ENCODE measurements at regions of chr16 and their contacts with region 1.

Region 1: DNA sequence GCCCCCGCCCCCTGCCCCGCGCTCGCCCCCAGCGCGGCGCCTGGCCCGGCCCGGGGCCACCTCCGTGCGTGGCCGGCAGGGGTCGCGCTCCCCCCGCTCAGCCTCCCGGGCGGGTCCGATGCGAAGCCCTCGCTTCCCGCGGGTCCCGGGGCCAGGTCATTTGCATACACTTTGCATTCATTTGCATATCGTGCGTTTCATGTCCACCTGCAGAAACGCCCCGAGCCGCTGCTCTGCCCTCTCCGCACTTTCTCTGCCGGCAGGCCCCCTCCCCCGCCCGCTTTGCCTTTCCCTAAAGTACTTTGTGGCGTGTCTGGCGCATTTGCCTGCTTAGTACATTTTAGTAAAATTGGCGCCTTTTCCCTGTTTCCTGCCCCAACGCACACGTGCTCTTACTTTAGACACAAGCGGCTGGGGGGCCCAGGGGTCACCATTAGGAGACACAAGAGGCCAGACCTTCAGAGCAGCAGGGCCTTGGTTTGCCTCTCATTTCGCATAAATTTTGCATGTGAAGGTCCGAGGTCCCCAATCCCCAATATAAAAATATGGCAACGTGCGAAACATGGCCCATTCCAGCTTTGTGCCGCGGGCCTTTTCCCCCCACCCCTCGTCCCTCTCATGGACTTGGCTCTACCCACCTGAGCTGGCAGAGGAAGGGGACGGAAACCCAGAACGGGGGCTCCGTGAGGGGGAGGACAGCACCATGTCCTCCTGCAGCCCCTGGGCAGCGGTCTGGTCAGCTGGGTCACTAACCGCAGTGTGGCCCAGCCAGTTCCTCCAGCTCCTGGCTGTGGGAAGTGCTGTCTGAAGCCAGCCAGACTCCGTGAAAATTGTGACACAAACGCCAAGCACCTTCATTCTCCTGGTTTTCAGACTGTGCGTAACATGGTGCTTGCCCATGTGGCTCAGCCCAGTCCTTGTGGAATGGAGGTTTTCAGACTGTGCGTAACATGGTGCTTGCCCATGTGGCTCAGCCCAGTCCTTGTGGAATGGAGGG is 34.8 kb downstream of the CBFA2T3 start:
- DNase-seq: no peak
- H3K4me3 ChIP-seq: peak overlapping the region in 3 of 4 donors; percentile 47 to 56 (median 54)
- H3K27ac ChIP-seq: no peak overlapping the region
- H3K4me1 ChIP-seq: peaks cover 0 to 35% (median 26%) of the 10 kb centered on the region in 4 donors
- H3K27me3 ChIP-seq: peaks cover 24 to 88% (median 52%) of the 10 kb centered on the region in 3 donors
- CTCF ChIP-seq: peak in 3 of 4 experiments; percentile 28 to 76 (median 31)
- EP300 ChIP-seq: no peak
- POLR2A ChIP-seq: no peak

Region 2: GRCh38 chr16:88811769-88812512 is 130.3 kb before region 1 on chr16 and contains the start of gene APRT:
- intact Hi-C with region 1: loop called (anchors 5 kb)
- DNase-seq: peak; percentile 97
- H3K4me3 ChIP-seq: peak within 1 kb of the TSS; percentile 63 to 88 (median 76)
- H3K27ac ChIP-seq: peak within 1 kb of the TSS; percentile 91 to 96 (median 96)
- H3K4me1 ChIP-seq: peaks cover 0 to 36% (median 28%) of the 10 kb centered on the region in 4 donors
- H3K27me3 ChIP-seq: no peaks in the 10 kb centered on the region
- CTCF ChIP-seq: peak in 2 of 4 experiments; percentile 9 to 24
- EP300 ChIP-seq: peak in 1 of 4 donors; percentile 46
- POLR2A ChIP-seq: no peak
- total RNA-seq, gene APRT: 56.6 to 78.3 (median 62.5) TPM

Region 3: DNA sequence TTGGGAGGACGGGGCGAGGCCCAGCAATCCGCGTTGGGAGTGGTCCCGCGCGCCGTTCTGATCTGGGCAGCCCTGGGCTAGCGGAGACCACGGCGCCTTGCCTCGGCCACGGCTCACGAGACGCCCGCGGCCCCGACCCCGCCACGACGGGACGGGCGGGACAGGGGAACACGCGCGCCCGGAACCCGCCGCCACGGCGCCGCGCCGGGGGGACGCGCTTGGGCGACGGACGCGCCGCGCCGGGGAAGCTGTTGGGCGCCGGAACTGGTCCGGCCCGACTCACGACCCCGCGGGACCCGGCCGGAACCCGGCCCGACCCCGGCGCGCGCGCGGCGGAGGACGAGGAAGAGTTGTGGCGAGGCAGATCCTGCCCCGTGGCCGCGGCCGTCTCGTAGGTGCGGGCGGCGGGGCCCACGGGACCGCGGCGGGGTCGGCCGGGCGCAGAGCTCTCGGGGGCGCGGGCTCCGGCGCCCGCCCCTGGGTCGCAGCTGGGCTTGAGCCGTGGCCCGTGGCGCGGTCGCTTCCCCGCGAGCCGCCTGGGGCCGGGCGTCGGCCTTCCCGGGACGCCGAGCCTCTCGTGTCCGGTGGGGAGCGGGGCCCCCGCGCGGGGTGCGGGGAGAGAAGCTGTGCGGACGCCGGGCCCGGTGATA is 151.5 kb after region 1 on chr16 and contains the start of gene ACSF3:
- intact Hi-C with region 1: loop called (anchors 5 kb)
- DNase-seq: peak; percentile 76
- H3K4me3 ChIP-seq: peak within 1 kb of the TSS; percentile 52 to 86 (median 82)
- H3K27ac ChIP-seq: peak within 1 kb of the TSS; percentile 62 to 80 (median 68)
- H3K4me1 ChIP-seq: peaks cover 0 to 32% (median 25%) of the 10 kb centered on the region in 4 donors
- H3K27me3 ChIP-seq: peaks cover 0 to 28% (median 27%) of the 10 kb centered on the region in 3 donors
- CTCF ChIP-seq: no peak
- EP300 ChIP-seq: no peak
- POLR2A ChIP-seq: no peak
- total RNA-seq, gene ACSF3: 19.7 to 31.6 (median 24.8) TPM

Region 4: DNA sequence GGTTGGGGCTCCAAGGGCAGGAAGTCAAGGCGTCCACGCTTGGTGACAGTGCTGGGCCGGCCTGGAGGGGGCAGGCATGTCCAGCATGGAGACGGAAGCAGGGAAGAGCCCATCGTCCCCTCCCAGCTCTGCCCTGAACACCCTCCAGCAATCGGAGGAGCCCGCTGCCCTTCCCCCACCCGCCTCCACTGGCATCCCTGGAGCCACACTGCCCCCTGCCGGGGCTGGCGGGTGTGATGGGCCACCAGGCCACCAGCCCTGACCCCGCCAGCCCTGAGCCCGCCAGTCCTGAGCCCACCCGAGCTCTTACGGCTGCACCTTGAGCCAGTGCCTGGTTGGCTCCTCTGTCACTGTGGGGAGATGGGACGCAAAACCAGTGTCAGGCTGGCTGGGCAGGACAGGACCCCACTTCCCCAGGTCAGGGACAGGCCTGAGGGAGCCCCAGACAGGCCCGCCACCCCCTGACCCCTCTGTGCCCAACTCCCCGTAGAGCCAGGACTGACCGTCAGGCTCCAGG is 225.3 kb after region 1 on chr16:
- intact Hi-C with region 1: loop called (anchors 2 kb)
- DNase-seq: peak; percentile 84
- H3K4me3 ChIP-seq: no peak overlapping the region
- H3K27ac ChIP-seq: no peak overlapping the region
- H3K4me1 ChIP-seq: peaks cover 0 to 25% (median 21%) of the 10 kb centered on the region in 4 donors
- H3K27me3 ChIP-seq: peaks cover 47 to 89% (median 75%) of the 10 kb centered on the region in 3 donors
- CTCF ChIP-seq: peak; percentile 26 to 84 (median 70)
- EP300 ChIP-seq: no peak
- POLR2A ChIP-seq: no peak